MCF 10A (cell line): ENCODE measurements at regions of chr11 and their contacts with region 1.

Region 1: GRCh38 chr11:35822815-35823495 is 120.9 kb upstream of the LDLRAD3 start:
- DNase-seq: peak; percentile 15
- H3K4me3 Mint-ChIP-seq: no peak overlapping the region
- H3K27ac Mint-ChIP-seq: peak overlapping the region; percentile 29
- H3K4me1 Mint-ChIP-seq: peaks cover 17% of the 10 kb centered on the region
- H3K27me3 Mint-ChIP-seq: no peaks in the 10 kb centered on the region
- CTCF ChIP-seq: no peak

Region 2: GRCh38 chr11:35485656-35486322 is 337.2 kb before region 1 on chr11:
- CTCF ChIA-PET with region 1: no interaction called
- POLR2A ChIA-PET with region 1: no interaction called
- intact Hi-C with region 1: loop called (anchors 1 kb)
- DNase-seq: peak; percentile 80
- H3K4me3 Mint-ChIP-seq: no peak overlapping the region
- H3K27ac Mint-ChIP-seq: no peak overlapping the region
- H3K4me1 Mint-ChIP-seq: peaks cover 17% of the 10 kb centered on the region
- H3K27me3 Mint-ChIP-seq: peaks cover 10% of the 10 kb centered on the region
- CTCF ChIP-seq: peak; percentile 92

Region 3: DNA sequence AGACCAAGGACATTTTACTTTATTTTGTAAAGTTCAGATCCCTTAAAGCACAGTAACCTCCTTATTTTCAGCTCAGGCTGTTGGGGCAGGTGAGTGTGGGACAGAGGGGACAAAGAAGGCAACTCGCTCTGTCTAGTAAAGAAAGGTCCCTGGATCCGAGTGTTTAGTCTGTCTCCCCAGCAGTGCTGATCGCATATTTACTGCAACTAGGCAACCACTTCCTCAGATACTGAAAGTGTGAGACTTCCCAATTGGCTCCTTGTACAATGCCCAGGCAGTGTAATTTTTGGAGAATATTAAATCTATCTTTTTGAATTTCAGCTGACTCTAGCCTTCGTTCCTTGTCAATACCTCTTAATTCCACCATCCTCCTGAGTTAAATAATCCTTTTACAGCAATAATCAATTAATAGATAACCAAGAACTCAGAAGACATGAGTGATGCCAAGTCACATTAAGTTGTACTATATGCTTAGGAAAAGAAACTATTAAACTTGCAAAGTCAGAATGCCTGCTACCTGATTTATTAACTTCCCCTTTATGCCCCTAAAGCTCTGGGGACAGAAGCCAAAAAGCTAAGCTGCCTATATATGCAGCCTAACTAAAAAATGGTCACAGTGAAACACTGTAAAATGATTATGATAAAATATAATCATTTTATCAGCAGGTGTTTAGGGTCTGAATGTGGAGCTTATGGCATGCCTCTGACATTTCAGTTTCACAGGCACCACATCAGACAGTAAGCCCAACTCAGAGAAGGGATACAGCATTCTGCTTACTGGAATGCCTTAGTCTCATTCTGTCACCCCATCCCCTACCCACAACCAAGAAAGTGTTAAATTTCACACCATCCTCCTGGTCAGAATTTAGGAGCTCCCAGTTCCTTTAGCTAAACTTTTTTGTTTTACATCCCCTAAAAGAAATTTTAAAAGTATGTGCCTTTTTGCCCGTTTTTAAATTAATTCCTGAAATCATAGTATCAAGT is 21.7 kb before region 1 on chr11:
- CTCF ChIA-PET with region 1: interaction called, 33 read pairs
- POLR2A ChIA-PET with region 1: interaction called, 5 read pairs
- intact Hi-C with region 1: no loop called
- DNase-seq: no peak
- H3K4me3 Mint-ChIP-seq: no peak overlapping the region
- H3K27ac Mint-ChIP-seq: no peak overlapping the region
- H3K4me1 Mint-ChIP-seq: peaks cover 37% of the 10 kb centered on the region
- H3K27me3 Mint-ChIP-seq: no peaks in the 10 kb centered on the region
- CTCF ChIP-seq: no peak

Region 4: DNA sequence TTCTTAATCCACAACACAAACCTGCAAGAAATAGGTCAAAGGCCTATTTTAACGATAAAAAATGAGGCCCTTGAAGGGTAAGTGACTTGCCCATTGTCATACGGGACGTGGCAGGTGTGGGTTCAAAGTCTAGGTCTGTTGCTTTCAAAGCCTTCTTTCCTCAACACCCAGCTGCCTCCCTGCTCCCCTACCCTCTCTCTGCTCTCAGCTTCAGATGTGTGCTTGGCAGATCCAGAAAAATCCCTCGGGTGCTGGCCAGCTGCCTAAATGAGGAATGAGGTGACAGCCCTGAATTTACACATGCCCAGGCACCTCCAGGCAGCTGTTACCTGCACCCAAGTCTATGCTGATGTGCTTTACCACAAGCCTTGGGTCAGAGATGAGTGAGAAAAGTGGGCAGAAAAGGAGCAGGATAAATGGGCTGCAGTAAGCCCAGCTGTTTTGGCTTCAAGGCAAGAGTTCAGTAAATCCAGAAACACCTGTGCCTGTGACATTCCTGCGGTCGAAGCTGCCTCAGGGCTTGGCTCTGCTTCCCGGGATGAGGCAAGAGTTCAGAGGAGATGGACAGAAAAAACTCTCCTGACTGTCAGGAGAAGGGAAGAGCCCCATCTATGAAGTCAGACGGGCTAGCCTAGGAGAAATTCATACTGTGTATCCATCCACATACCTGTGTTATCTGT is 71.0 kb after region 1 on chr11:
- CTCF ChIA-PET with region 1: interaction called, 38 read pairs
- POLR2A ChIA-PET with region 1: interaction called, 25 read pairs
- intact Hi-C with region 1: no loop called
- DNase-seq: peak; percentile 97
- H3K4me3 Mint-ChIP-seq: peak overlapping the region; percentile 31
- H3K27ac Mint-ChIP-seq: peak overlapping the region; percentile 33
- H3K4me1 Mint-ChIP-seq: peaks cover 33% of the 10 kb centered on the region
- H3K27me3 Mint-ChIP-seq: no peaks in the 10 kb centered on the region
- CTCF ChIP-seq: no peak

Region 5: GRCh38 chr11:35953081-35953760 is 130.3 kb after region 1 on chr11:
- CTCF ChIA-PET with region 1: interaction called, 13 read pairs
- POLR2A ChIA-PET with region 1: interaction called, 5 read pairs
- intact Hi-C with region 1: no loop called
- DNase-seq: peak; percentile 69
- H3K4me3 Mint-ChIP-seq: no peak overlapping the region
- H3K27ac Mint-ChIP-seq: peak overlapping the region; percentile 81
- H3K4me1 Mint-ChIP-seq: peaks cover 66% of the 10 kb centered on the region
- H3K27me3 Mint-ChIP-seq: no peaks in the 10 kb centered on the region
- CTCF ChIP-seq: no peak

Region 6: DNA sequence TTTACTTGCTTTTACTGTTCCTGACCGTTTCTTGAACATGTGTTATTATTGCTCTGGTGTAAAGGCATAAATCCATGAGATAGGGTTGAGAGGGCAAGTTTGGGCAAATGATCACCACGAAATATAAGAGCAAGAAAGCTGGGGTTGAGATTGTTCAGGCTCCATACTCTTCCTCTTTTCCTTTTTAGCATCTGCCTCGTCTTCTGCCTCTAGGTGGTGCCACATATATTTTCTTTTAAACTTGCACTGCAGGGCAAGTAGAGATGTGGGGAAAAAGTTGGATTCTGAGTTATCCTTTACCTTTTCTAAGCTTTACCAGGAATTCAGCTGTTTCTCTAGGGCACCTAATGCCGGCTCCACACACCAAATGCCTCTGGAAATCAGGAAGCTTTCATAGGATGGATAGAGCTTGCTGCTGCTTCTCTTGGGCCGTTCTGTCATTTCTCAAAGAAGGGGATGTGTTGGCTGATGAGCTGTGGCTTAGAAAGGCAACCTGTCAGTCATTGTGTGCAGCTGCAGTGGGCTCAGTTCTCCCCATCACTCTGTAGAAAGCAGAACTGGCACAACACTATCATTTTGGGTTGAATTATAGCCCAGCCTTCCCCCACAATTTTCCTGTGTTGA is 219.1 kb after region 1 on chr11:
- CTCF ChIA-PET with region 1: interaction called, 10 read pairs
- POLR2A ChIA-PET with region 1: interaction called, 3 read pairs
- intact Hi-C with region 1: loop called (anchors 1 kb)
- DNase-seq: peak; percentile 27
- H3K4me3 Mint-ChIP-seq: no peak overlapping the region
- H3K27ac Mint-ChIP-seq: peak overlapping the region; percentile 59
- H3K4me1 Mint-ChIP-seq: peaks cover 12% of the 10 kb centered on the region
- H3K27me3 Mint-ChIP-seq: no peaks in the 10 kb centered on the region
- CTCF ChIP-seq: peak; percentile 51

Region 7: GRCh38 chr11:36265793-36266628 is 443.1 kb after region 1 on chr11:
- CTCF ChIA-PET with region 1: interaction called, 53 read pairs
- POLR2A ChIA-PET with region 1: interaction called, 5 read pairs
- intact Hi-C with region 1: loop called (anchors 1 kb)
- DNase-seq: peak; percentile 68
- H3K4me3 Mint-ChIP-seq: no peak overlapping the region
- H3K27ac Mint-ChIP-seq: no peak overlapping the region
- H3K4me1 Mint-ChIP-seq: no peaks in the 10 kb centered on the region
- H3K27me3 Mint-ChIP-seq: no peaks in the 10 kb centered on the region
- CTCF ChIP-seq: peak; percentile 92